GM23248 (cell line): ENCODE measurements at regions of chr11 and their contacts with region 1.

Region 1: DNA sequence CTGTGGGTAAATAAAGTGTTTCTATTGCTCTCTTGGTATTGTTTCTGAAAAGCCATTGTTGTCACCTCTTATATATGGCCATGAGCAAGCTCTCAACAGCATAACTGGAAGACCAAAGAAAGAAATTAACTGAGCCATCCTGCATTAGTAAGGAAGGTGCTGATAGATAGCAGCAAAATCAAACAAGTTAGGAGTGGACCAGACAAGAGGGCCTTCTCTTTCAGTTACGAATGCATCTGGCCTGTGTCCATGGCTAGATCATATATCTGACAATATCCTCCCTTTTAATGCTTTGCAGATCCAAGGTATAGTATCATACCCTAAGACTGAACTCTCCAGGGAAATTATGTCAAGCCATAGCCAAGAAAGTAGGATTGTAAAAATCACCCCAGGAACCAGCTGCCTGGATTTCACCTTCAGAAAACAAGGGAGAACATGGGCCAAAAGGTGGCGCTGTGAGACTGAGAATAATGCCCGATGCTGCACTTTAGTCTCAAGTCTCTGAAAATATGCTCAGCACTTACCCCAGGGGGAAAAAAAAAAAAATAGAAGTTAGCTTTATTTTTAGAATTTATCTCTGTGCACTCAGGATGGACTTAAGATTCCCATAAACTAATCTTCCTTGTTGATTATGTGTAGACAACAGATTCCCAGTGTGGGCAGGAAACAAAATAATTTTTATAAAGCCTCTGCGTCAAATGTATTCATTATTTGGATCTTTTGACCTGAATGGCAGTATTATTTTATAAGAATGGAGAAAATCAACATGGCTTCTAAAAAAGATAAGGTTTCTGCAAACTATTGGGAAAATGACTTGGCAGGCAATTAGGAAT is 415.1 kb downstream of the ETS1 start:
- DNase-seq: peak; percentile 87
- H3K4me3 ChIP-seq: no peak overlapping the region
- H3K27ac ChIP-seq: no peak overlapping the region
- H3K4me1 ChIP-seq: peaks cover 37% of the 10 kb centered on the region
- H3K27me3 ChIP-seq: no peaks in the 10 kb centered on the region

Region 2: DNA sequence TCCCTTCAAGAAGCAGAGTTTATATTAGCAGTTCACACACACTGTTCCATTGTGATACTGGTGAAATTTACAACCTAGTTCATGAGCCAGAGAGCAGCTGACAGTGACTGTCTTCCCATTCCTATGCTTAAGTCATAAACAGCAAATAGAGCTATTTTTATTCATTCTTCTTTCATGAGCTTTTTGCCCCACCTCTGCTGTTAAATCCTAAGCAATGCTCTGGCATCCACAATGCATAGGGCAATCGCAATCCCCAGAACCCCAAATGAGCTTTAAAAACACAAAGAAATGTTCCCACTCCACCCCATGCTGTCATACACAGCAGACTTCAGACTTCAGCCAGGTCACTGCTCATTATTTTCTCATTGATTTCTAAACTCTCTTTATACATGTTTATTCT is 107.6 kb after region 1 on chr11:
- in situ Hi-C with region 1: loop called (anchors 10 kb)
- DNase-seq: peak; percentile 72
- H3K4me3 ChIP-seq: no peak overlapping the region
- H3K27ac ChIP-seq: peak overlapping the region; percentile 43
- H3K4me1 ChIP-seq: peaks cover 11% of the 10 kb centered on the region
- H3K27me3 ChIP-seq: no peaks in the 10 kb centered on the region